A549 (cell line): ENCODE measurements at regions of chr9 and their contacts with region 1.

Region 1: DNA sequence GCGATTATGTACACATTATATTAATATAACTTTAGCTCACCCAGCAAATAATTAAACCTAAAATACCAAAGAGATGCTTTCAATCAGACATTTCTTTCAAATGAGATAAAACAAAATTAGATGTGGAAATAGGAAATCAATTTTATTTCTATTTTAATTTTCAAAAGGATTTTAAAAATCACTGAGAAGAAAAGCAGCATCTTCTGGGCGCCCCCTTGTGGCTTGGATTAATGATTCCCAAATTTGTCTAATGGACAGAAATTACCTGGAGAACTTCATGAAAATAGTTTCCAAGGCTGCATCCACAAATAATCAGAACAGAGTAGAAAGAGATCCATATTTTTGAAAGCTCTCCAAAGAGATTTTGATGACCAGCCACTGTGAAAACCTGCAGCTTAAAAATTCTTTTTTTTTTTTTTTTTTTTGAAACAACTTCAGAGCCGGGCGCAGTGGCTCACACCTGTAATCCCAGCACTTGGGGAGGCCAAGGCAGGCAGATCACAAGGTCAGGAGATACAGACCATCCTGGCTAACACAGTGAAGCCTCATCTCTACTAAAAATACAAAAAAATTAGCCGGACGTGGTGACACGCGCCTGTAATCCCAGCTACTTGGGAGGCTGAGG is 50.9 kb upstream of the CEMIP2 start:
- DNase-seq: peak; percentile 21 to 37
- ATAC-seq: no peak
- H3K4me3 ChIP-seq: no peak overlapping the region
- H3K27ac ChIP-seq: no peak overlapping the region
- H3K4me1 ChIP-seq: peaks cover 9% of the 10 kb centered on the region; the same call in 1 of the 3 replicates
- CTCF ChIP-seq: peak; percentile 91
- EP300 ChIP-seq: no peak
- POLR2A ChIP-seq: no peak
- RAD21 ChIP-seq: peak; percentile 75 to 79

Region 2: GRCh38 chr9:71285191-71285656 is 534.0 kb before region 1 on chr9:
- CTCF ChIA-PET with region 1: interaction called, 53 read pairs
- POLR2A ChIA-PET with region 1: no interaction called
- DNase-seq: peak; percentile 23 to 68
- ATAC-seq: peak; percentile 83 to 93; a peak in 5 of 6 replicates
- H3K4me3 ChIP-seq: no peak overlapping the region
- H3K27ac ChIP-seq: no peak overlapping the region
- H3K4me1 ChIP-seq: no peaks in the 10 kb centered on the region
- CTCF ChIP-seq: peak; percentile 89
- EP300 ChIP-seq: no peak
- POLR2A ChIP-seq: no peak
- RAD21 ChIP-seq: peak; percentile 90 to 91

Region 3: GRCh38 chr9:71778085-71778484 is 41.1 kb before region 1 on chr9:
- CTCF ChIA-PET with region 1: interaction called, 12 read pairs
- POLR2A ChIA-PET with region 1: no interaction called
- DNase-seq: no peak
- ATAC-seq: no peak
- H3K4me3 ChIP-seq: no peak overlapping the region
- H3K27ac ChIP-seq: no peak overlapping the region
- H3K4me1 ChIP-seq: peaks cover 16% of the 10 kb centered on the region
- CTCF ChIP-seq: no peak
- EP300 ChIP-seq: no peak
- POLR2A ChIP-seq: no peak
- RAD21 ChIP-seq: no peak

Region 4: DNA sequence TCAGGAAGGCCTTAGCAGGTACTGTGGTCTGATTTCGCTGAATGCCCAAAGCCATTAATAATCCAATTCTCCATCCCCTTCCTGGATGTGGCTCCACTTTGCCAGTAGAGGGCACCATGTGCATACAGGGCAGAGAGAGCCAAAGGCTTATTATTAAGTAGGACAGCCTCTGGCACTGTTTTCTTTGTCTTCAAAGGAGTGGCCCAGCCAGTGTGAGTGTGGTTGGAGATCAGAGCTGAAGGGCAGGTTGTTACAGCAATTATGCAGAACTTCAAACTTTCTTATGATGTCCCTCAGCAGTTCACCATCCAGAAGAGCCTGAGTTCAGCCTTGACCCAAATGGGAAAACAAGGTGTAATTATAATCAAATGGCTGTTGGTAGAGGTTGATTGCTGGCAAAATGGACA is 12.3 kb before region 1 on chr9:
- CTCF ChIA-PET with region 1: interaction called, 76 read pairs
- POLR2A ChIA-PET with region 1: no interaction called
- DNase-seq: peak; percentile 59 to 81
- ATAC-seq: peak; percentile 98 to 100
- H3K4me3 ChIP-seq: no peak overlapping the region
- H3K27ac ChIP-seq: no peak overlapping the region
- H3K4me1 ChIP-seq: peaks cover 3% of the 10 kb centered on the region; the same call in 1 of the 3 replicates
- CTCF ChIP-seq: peak; percentile 95
- EP300 ChIP-seq: no peak
- POLR2A ChIP-seq: no peak
- RAD21 ChIP-seq: peak; percentile 88 to 94

Region 5: DNA sequence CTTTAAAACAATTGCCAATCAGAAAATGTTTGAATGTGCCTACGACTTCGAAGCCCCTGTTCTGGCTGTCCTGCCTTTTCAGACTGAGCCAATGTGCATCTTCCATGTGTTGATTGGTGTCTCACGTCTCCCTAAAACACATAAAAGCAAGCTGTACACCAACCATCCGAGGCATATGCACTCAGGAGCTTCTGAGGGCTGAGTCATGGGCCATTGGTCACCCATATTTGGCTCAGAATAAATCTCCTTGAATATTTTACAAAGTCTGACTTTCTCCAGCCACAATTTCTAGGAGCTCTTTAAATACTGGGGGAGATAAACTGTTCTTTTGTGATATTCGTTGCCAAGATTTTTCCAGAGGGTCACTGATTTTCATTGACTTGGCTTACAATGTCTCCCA is 187.3 kb after region 1 on chr9:
- CTCF ChIA-PET with region 1: no interaction called
- POLR2A ChIA-PET with region 1: no interaction called
- DNase-seq: no peak
- ATAC-seq: 0 out of 6 replicates have a peak, but pooled peaks of 1 of the 2 experiments have one; percentile 43
- H3K4me3 ChIP-seq: no peak overlapping the region
- H3K27ac ChIP-seq: no peak overlapping the region
- H3K4me1 ChIP-seq: no peaks in the 10 kb centered on the region
- CTCF ChIP-seq: no peak
- EP300 ChIP-seq: no peak
- POLR2A ChIP-seq: no peak
- RAD21 ChIP-seq: no peak

Region 6: GRCh38 chr9:72022841-72023240 is 203.6 kb after region 1 on chr9:
- CTCF ChIA-PET with region 1: interaction called, 12 read pairs
- POLR2A ChIA-PET with region 1: no interaction called
- DNase-seq: peak in 1 of 2 experiments; percentile 58
- ATAC-seq: peak in 1 of 2 experiments; percentile 49; a peak in 2 of 6 replicates
- H3K4me3 ChIP-seq: no peak overlapping the region
- H3K27ac ChIP-seq: no peak overlapping the region
- H3K4me1 ChIP-seq: peaks cover 10% of the 10 kb centered on the region; the same call in 2 of the 3 replicates
- CTCF ChIP-seq: no peak
- EP300 ChIP-seq: no peak
- POLR2A ChIP-seq: no peak
- RAD21 ChIP-seq: no peak

Region 7: GRCh38 chr9:72185561-72185960 is 366.3 kb after region 1 on chr9:
- CTCF ChIA-PET with region 1: no interaction called
- POLR2A ChIA-PET with region 1: no interaction called
- DNase-seq: no peak
- ATAC-seq: no peak
- H3K4me3 ChIP-seq: no peak overlapping the region
- H3K27ac ChIP-seq: no peak overlapping the region
- H3K4me1 ChIP-seq: no peaks in the 10 kb centered on the region
- CTCF ChIP-seq: no peak
- EP300 ChIP-seq: no peak
- POLR2A ChIP-seq: no peak
- RAD21 ChIP-seq: no peak

Region 8: DNA sequence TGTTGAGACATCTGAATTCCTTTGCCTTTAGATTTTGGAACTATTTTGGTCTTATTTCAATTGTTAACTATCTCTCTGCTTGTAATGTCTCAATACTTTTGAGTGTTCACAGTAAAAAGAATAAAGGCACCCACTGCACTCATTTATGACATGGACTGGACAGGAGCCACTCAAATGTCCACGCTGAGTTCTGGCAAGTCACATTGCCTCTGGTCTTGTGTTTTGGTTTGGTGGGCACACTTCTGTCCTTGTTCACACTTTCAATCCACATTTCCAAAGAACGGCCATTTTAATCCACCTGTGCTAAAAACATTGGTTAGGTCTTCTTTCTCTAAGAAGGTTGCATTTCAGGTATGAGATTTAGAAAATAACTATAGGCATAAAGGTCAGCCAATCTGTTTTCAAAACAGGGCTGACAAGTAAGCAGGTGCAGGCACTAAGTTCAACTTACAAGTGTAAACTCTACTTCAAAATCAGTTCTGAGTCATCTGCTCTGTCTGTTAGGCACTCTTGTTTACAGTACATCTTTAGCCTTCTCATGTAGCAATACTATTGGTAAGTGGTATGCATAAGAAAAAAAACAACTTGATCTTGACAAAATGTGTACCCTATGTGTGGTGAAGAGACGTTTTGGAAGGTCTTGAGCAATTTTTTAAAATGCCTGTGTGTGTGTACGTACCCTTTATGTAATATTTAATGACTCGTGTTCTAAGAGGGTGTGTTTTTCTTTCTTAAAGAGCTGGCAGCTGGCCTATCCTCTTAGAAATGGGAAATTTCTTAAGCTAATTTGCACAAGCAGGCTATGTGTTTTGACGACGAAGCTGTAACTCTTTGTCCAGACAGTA is 577.2 kb after region 1 on chr9:
- CTCF ChIA-PET with region 1: no interaction called
- POLR2A ChIA-PET with region 1: no interaction called
- DNase-seq: peak; percentile 28 to 73
- ATAC-seq: peak; percentile 92 to 94
- H3K4me3 ChIP-seq: no peak overlapping the region
- H3K27ac ChIP-seq: peak overlapping the region; percentile 50 to 54; a peak in 5 of 6 replicates
- H3K4me1 ChIP-seq: peaks cover 38% of the 10 kb centered on the region
- CTCF ChIP-seq: no peak
- EP300 ChIP-seq: peak in 1 of 2 experiments; percentile 30; a peak in 1 of 5 replicates
- POLR2A ChIP-seq: no peak
- RAD21 ChIP-seq: no peak; a peak in 1 of 5 replicates